Right ventricle myocardium superior (tissue), 1 donor: ENCODE measurements at regions of chr13 and their contacts with region 1.

Region 1: DNA sequence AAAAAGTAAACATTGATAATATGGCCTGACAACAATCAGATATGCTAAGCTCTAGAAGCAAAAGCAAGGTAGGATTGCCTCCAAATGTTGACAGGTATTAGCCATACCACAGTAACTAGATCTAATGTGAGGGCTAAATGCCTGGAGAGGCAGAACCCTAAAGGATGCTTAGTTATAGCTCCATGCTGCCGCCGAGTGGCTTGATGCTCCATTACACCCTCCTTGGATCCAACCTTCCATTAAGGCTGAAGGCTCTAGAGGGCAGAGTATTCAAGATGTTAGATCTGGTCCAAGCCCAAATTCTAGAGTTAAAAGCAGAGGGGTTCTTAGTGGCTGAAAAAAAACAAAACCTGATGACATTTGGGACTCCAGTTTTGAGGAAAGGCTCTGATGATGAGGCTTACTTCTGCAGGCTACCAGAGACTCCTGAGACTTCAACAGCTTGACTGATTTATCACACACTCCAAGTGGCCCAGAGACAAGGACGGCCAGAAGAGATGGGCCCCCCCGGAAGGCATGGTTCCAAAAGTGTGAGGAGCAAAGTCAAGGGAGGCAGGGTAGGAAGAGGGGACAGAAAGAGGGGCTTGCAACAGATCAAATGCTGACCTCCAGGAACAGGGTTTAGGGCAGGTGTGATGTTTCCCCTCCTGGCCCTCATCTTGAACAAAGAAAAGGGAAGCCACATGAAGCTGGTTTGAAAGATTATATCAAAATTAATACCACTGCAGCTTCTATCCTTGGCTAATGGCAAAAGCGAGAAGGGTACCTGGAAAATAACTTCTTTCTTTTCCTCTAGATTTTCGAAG is 21.9 kb upstream of the CPB2 start:
- DNase-seq: peak; percentile 83
- ATAC-seq: peak; percentile 90

Region 2: GRCh38 chr13:45511310-45512097 is 615.3 kb before region 1 on chr13:
- intact Hi-C with region 1: loop called (anchors 5 kb)
- DNase-seq: no peak
- ATAC-seq: peak; percentile 73

Region 3: DNA sequence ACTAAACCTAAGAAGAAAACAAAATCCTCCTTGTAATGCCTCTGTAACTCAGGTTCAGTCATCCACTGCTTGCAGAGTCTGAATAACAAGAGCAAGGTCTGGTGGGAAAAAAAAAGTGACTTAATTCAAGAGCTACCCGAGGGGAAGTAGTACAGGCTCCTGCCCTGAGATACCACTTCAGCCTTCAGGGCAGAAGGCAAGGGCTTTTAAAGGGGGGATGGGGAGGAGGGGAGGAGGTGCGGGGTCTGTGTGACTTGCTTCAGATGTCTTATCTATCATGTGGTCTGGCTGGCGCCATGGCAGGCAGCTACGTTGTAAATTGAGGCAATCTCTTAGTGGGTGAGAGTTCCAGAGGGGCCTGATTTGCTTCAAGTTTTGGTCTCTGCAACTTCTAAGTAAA is 151.7 kb after region 1 on chr13:
- intact Hi-C with region 1: no loop called
- DNase-seq: no peak
- ATAC-seq: no peak

Region 4: GRCh38 chr13:46359750-46360149 is 233.0 kb after region 1 on chr13:
- intact Hi-C with region 1: no loop called
- DNase-seq: no peak
- ATAC-seq: no peak